Naive thymus-derived CD4-positive, alpha-beta T cell (primary cell): ENCODE measurements at regions of chr4 and their contacts with region 1.

Region 1: DNA sequence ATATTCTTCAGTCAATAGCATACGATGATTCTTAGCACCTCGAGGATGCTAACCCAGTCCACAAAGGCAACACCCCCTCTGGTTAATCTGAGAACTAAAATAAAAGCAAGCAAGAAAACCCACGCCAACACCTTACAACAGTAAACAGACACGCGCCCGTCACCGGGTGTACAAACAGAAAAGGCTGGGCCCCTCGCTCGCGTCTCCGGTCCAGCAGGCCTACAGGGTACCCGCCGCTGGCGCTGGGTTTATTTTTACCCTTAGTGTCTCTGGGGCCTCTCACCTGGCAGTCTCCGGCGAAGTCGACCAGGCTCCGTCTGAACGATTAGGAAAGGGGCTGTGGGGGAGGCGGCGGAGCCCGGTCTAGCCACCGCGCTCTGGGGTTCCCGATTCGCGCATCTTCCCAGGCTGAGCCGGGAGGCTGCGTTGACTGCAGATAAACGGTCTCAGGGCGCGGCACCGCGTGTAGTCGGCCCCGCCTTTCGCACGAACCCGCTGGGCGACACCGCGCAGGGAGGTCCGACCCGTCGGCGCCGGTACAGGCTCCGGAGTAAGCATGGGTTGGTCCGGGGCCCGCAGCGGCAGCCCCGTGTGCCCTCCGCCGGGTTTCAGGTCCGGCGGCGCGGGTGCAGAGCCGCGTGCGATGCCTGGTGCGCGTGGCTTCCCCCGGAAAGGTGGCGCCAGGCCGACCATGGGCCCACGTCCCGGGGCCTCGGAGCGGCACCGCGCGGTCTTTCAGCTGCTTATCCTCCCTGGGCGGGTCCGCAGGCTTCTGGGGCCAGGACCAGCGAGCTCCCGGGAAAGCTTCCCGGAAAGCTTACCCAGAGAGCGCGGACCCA is 441 bp downstream of the SLC9B2 start:
- DNase-seq: peak; percentile 53 to 75 (median 68)
- ATAC-seq: peak; percentile 83
- H3K4me3 ChIP-seq: peak overlapping the region; percentile 74
- H3K4me3 Mint-ChIP-seq: peak overlapping the region; percentile 77 to 97 (median 95)
- H3K27ac ChIP-seq: peak overlapping the region; percentile 87
- H3K27ac Mint-ChIP-seq: peak overlapping the region; percentile 86 to 99 (median 97)
- H3K4me1 ChIP-seq: peaks cover 10 to 17% of the 10 kb centered on the region in 2 donors
- H3K4me1 Mint-ChIP-seq: peaks cover 23 to 54% (median 47%) of the 10 kb centered on the region in 7 donors
- H3K27me3 ChIP-seq: no peaks in the 10 kb centered on the region
- H3K27me3 Mint-ChIP-seq: no peaks in the 10 kb centered on the region

Region 2: DNA sequence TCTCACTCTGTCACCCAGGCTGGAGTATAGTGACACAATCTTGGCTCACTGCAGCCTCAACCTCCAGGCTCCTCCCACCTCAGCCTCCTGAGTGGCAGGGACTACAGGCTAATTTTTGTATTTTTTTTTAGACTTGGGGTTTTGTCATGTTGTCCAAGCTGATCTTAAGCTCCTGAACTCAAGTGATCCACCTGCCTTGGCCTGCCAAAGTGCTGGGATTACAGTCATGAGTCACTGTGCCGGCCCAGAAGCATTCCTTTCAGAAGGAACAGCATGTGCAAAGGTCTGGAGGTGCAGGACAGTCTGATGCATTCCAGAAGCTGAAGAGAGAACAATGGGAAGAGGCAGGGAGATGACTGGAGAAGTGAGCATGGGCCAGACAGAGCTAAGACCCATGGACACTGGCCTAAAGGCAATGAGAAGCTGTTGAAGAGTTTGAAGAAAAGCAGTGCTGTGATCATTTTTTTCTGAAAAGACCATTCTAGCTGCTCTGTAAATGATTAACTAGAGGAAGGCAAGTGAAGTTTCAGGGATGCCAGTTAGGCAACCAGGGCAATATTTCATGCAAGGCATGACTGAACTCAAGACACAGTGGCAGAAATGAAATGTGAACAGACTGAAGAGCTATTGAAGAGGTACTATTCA is 358.6 kb before region 1 on chr4:
- CTCF ChIA-PET with region 1: no interaction called
- POLR2A ChIA-PET with region 1: no interaction called
- intact Hi-C with region 1: no loop called
- DNase-seq: no peak
- ATAC-seq: no peak
- H3K4me3 ChIP-seq: no peak overlapping the region
- H3K4me3 Mint-ChIP-seq: no peak overlapping the region
- H3K27ac ChIP-seq: no peak overlapping the region
- H3K27ac Mint-ChIP-seq: no peak overlapping the region
- H3K4me1 ChIP-seq: no peaks in the 10 kb centered on the region
- H3K4me1 Mint-ChIP-seq: peaks cover 0 to 8% (median 4%) of the 10 kb centered on the region in 7 donors
- H3K27me3 ChIP-seq: no peaks in the 10 kb centered on the region
- H3K27me3 Mint-ChIP-seq: no peaks in the 10 kb centered on the region

Region 3: GRCh38 chr4:103046416-103047290 is 29.5 kb before region 1 on chr4:
- CTCF ChIA-PET with region 1: no interaction called
- POLR2A ChIA-PET with region 1: no interaction called
- intact Hi-C with region 1: loop called in 1 of 2 experiments (anchors 2 kb)
- DNase-seq: peak in 7 of 9 donors; percentile 18 to 65 (median 53)
- ATAC-seq: peak; percentile 98
- H3K4me3 ChIP-seq: no peak overlapping the region
- H3K4me3 Mint-ChIP-seq: no peak overlapping the region
- H3K27ac ChIP-seq: no peak overlapping the region
- H3K27ac Mint-ChIP-seq: peak overlapping the region in 1 of 9 donors; percentile 22
- H3K4me1 ChIP-seq: no peaks in the 10 kb centered on the region
- H3K4me1 Mint-ChIP-seq: peaks cover 0 to 13% (median 0%) of the 10 kb centered on the region in 7 donors
- H3K27me3 ChIP-seq: no peaks in the 10 kb centered on the region
- H3K27me3 Mint-ChIP-seq: no peaks in the 10 kb centered on the region